Heart left ventricle (tissue), 16 donors: ENCODE measurements at regions of chr13 and their contacts with region 1.

Region 1: GRCh38 chr13:104920091-104920490 is 1615.4 kb downstream of the EFNB2 start:
- DNase-seq: no peak
- ATAC-seq: no peak
- H3K4me3 ChIP-seq: no peak overlapping the region
- H3K27ac ChIP-seq: no peak overlapping the region
- H3K4me1 ChIP-seq: no peaks in the 10 kb centered on the region
- H3K27me3 ChIP-seq: no peaks in the 10 kb centered on the region
- CTCF ChIP-seq: no peak
- POLR2A ChIP-seq: no peak

Region 2: GRCh38 chr13:104869501-104869900 is 50.6 kb before region 1 on chr13:
- intact Hi-C with region 1: loop called in 1 of 10 experiments (anchors 5 kb)
- DNase-seq: no peak
- ATAC-seq: no peak
- H3K4me3 ChIP-seq: no peak overlapping the region
- H3K27ac ChIP-seq: no peak overlapping the region
- H3K4me1 ChIP-seq: no peaks in the 10 kb centered on the region
- H3K27me3 ChIP-seq: no peaks in the 10 kb centered on the region
- CTCF ChIP-seq: no peak
- POLR2A ChIP-seq: no peak

Region 3: GRCh38 chr13:104996022-104996421 is 75.9 kb after region 1 on chr13:
- intact Hi-C with region 1: no loop called
- DNase-seq: no peak
- ATAC-seq: no peak
- H3K4me3 ChIP-seq: no peak overlapping the region
- H3K27ac ChIP-seq: no peak overlapping the region
- H3K4me1 ChIP-seq: no peaks in the 10 kb centered on the region
- H3K27me3 ChIP-seq: no peaks in the 10 kb centered on the region
- CTCF ChIP-seq: no peak
- POLR2A ChIP-seq: no peak